SK-N-SH (cell line): ENCODE measurements at regions of chr19 and their contacts with region 1.

Region 1: DNA sequence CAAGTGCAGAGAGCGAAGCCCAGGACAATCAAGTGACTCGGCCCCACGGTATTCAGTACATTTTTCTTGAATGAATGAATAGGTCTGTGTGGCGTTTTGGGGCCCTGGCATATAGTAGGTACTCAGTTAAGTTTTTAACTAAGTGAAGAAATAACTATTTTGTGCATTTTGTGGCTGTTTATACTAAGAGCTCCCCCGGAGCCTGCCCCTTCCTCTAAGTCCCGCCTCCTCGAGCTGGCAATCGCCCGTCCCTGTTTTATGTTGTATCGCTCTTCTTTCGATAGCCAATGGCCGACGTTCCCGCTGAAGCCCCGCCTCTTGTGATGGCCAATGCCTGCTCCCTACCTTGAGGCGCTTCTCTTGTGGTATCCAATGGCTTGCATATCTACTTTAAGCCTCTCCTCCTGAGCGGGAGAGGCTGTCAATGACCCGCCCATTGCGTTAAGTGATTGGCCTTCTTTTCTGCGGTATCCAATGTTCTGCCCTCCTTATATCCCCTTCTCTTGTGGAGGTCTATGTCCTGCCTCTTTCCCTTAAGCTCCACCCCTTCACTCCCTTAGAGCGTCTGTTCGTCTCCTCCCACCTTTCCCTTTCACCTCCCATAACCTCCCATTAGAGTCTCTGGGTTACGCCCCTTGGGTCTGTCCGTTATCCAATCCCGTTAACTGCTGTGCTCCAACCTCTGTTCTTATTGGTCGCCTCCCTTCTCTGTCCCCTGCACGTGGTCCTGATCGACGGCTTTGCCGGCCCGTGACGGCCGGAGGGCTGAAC is 509 bp upstream of the HDGFL2 start:
- DNase-seq: peak; percentile 97
- H3K4me3 ChIP-seq: peak overlapping the region; percentile 60 to 66
- H3K27ac ChIP-seq: peak overlapping the region; percentile 82 to 90
- H3K4me1 ChIP-seq: peaks cover 3 to 21% of the 10 kb centered on the region in 2 experiments; a peak in 1 of 4 replicates
- H3K27me3 ChIP-seq: no peaks in the 10 kb centered on the region
- CTCF ChIP-seq: no peak
- EP300 ChIP-seq: no peak
- RAD21 ChIP-seq: no peak

Region 2: GRCh38 chr19:4456843-4457653 is 14.5 kb before region 1 on chr19:
- CTCF ChIA-PET with region 1: no interaction called
- POLR2A ChIA-PET with region 1: interaction called, 11 read pairs
- DNase-seq: peak; percentile 98
- H3K4me3 ChIP-seq: peak overlapping the region; percentile 58 to 87
- H3K27ac ChIP-seq: peak overlapping the region; percentile 83 to 89
- H3K4me1 ChIP-seq: peaks cover 6 to 13% of the 10 kb centered on the region in 2 experiments; a peak in 2 of 4 replicates
- H3K27me3 ChIP-seq: no peaks in the 10 kb centered on the region
- CTCF ChIP-seq: no peak
- EP300 ChIP-seq: no peak
- RAD21 ChIP-seq: no peak

Region 3: GRCh38 chr19:4516939-4517300 is 45.3 kb after region 1 on chr19:
- CTCF ChIA-PET with region 1: no interaction called
- POLR2A ChIA-PET with region 1: no interaction called
- DNase-seq: no peak
- H3K4me3 ChIP-seq: no peak overlapping the region
- H3K27ac ChIP-seq: no peak overlapping the region
- H3K4me1 ChIP-seq: peaks cover 0 to 3% of the 10 kb centered on the region in 2 experiments; a peak in 1 of 4 replicates
- H3K27me3 ChIP-seq: no peaks in the 10 kb centered on the region
- CTCF ChIP-seq: no peak
- EP300 ChIP-seq: no peak
- RAD21 ChIP-seq: no peak